HepG2 (cell line): ENCODE measurements at regions of chr15 and their contacts with region 1.

Region 1: DNA sequence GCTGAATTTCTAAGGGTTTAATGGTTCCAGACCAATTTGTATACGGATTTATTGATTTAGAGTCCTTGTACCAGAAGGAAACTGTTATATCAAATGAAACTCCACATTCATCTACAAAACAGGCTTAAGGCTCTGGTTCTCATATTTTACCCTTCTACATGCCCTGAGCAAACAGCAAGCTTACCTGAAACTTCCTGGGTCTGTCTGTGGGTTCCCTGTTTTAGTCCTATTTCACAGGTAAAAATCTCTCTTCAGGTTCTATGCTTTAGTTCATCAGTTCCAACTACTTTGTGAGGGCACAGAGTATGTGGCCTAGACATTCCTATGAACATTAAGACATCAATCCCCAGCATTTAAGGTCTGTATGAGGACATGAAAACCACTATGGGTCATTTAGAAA is 57.7 kb downstream of the RFX7 start:
- DNase-seq: no peak
- ATAC-seq: no peak
- H3K4me3 ChIP-seq: no peak overlapping the region
- H3K27ac ChIP-seq: no peak overlapping the region
- H3K4me1 ChIP-seq: peaks cover 38% of the 10 kb centered on the region
- H3K27me3 ChIP-seq: no peaks in the 10 kb centered on the region
- CTCF ChIP-seq: no peak
- EP300 ChIP-seq: no peak
- POLR2A ChIP-seq: no peak
- RAD21 ChIP-seq: no peak

Region 2: GRCh38 chr15:56148064-56148463 is 37.9 kb before region 1 on chr15:
- CTCF ChIA-PET with region 1: no interaction called
- POLR2A ChIA-PET with region 1: no interaction called
- in situ Hi-C with region 1: no loop called
- intact Hi-C with region 1: loop called (anchors 2 kb)
- DNase-seq: no peak
- ATAC-seq: no peak
- H3K4me3 ChIP-seq: no peak overlapping the region
- H3K27ac ChIP-seq: no peak overlapping the region
- H3K4me1 ChIP-seq: no peaks in the 10 kb centered on the region
- H3K27me3 ChIP-seq: no peaks in the 10 kb centered on the region
- CTCF ChIP-seq: no peak
- EP300 ChIP-seq: no peak
- POLR2A ChIP-seq: no peak
- RAD21 ChIP-seq: no peak

Region 3: GRCh38 chr15:56245871-56246814 is 60.2 kb after region 1 on chr15:
- CTCF ChIA-PET with region 1: no interaction called
- POLR2A ChIA-PET with region 1: no interaction called
- in situ Hi-C with region 1: no loop called
- intact Hi-C with region 1: loop called (anchors 5 kb)
- DNase-seq: peak; percentile 82
- ATAC-seq: peak; percentile 69
- H3K4me3 ChIP-seq: peak overlapping the region; percentile 77 to 84 (median 77)
- H3K27ac ChIP-seq: peak overlapping the region; percentile 98
- H3K4me1 ChIP-seq: peaks cover 17% of the 10 kb centered on the region
- H3K27me3 ChIP-seq: no peaks in the 10 kb centered on the region; a peak in 1 of 5 replicates
- CTCF ChIP-seq: peak; percentile 98
- EP300 ChIP-seq: peak in 1 of 2 experiments; percentile 31; a peak in 1 of 4 replicates
- POLR2A ChIP-seq: peak; percentile 41 to 42; a peak in 2 of 4 replicates
- RAD21 ChIP-seq: peak; percentile 89

Region 4: GRCh38 chr15:56325186-56325585 is 139.2 kb after region 1 on chr15:
- CTCF ChIA-PET with region 1: no interaction called
- POLR2A ChIA-PET with region 1: no interaction called
- in situ Hi-C with region 1: no loop called
- intact Hi-C with region 1: no loop called
- DNase-seq: no peak
- ATAC-seq: no peak
- H3K4me3 ChIP-seq: no peak overlapping the region
- H3K27ac ChIP-seq: no peak overlapping the region
- H3K4me1 ChIP-seq: 0 out of 2 replicates have a peak, but pooled peaks cover 8% of the 10 kb centered on the region
- H3K27me3 ChIP-seq: peaks cover 0 to 3% of the 10 kb centered on the region in 2 experiments; a peak in 1 of 5 replicates
- CTCF ChIP-seq: no peak
- EP300 ChIP-seq: no peak
- POLR2A ChIP-seq: no peak
- RAD21 ChIP-seq: no peak